Heart right ventricle (tissue), 16 donors: ENCODE measurements at regions of chr13 and their contacts with region 1.

Region 1: DNA sequence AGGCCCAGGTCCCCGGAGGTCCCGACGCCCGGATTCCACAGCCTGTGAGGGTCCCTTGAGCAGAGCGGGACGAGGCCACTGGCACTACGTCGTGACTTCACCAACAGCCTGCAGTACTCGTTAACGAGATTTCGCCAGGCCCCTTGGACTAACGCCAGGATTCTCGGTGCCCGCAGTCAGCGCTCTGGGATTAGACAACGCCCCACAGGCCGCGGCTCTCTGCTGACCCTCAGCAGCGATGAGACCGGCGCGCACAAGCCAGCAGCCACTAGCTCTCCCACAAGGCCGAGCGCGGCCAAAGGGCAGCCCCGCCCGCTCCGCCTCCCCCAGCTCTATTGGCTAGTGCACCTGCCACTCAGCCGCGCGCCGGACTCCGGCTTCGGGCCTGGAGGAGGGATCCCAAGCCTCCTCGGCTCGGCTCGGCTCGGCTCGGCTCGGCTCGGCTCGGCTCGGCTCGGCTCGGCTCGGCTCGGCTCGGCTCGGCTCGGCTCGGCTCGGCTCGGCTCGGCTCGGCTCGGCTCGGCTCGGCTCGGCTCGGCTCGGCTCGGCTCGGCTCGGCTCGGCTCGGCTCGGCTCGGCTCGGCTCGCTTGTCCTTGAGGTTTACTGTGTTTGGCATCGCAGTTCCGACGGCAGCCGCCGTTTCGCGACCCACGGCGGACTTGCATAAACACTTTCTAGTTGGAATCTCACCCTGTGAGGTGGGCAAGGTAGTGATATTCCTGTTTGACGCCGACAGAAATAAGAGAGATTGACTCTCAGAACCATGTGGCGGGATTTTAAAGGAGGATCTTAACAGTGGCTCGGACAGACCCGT is 231.7 kb upstream of the SERP2 start:
- DNase-seq: peak; percentile 98 to 99
- ATAC-seq: peak; percentile 99 to 100 (median 100)
- H3K4me3 ChIP-seq: peak overlapping the region; percentile 50 to 79 (median 58)
- H3K27ac ChIP-seq: peak overlapping the region; percentile 91 to 99 (median 96)
- H3K4me1 ChIP-seq: peaks cover 5 to 22% (median 10%) of the 10 kb centered on the region in 9 donors
- H3K27me3 ChIP-seq: no peaks in the 10 kb centered on the region
- CTCF ChIP-seq: peak in 2 of 9 donors; percentile 9 to 21

Region 2: DNA sequence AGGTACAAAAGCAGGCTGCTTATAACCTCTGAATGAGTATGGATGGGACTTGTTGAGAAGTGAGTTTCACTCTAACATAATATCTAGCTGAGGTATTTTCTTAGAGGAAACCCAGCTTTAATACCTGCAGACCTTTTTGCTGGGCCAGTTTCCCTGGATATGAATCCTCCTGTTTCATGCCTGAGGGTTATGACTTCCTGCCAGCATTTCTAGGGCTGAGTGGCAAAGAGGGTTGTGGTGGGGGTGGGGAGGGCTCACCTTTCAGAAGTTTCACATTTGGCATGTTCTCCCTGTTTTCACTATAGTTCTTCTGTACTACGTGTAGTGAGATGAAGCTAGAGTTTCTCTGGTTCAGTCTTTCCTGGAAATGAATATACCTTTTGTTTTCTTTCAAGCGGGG is 188.6 kb before region 1 on chr13:
- intact Hi-C with region 1: no loop called
- DNase-seq: no peak
- ATAC-seq: no peak
- H3K4me3 ChIP-seq: no peak overlapping the region
- H3K27ac ChIP-seq: no peak overlapping the region
- H3K4me1 ChIP-seq: peaks cover 0 to 9% (median 0%) of the 10 kb centered on the region in 9 donors
- H3K27me3 ChIP-seq: peaks cover 0 to 16% (median 0%) of the 10 kb centered on the region in 7 donors
- CTCF ChIP-seq: no peak

Region 3: GRCh38 chr13:44219577-44220548 is 77.9 kb after region 1 on chr13:
- intact Hi-C with region 1: loop called in 1 of 10 experiments (anchors 5 kb)
- DNase-seq: no peak
- ATAC-seq: peak in 7 of 8 donors; percentile 15 to 37 (median 27)
- H3K4me3 ChIP-seq: no peak overlapping the region
- H3K27ac ChIP-seq: peak overlapping the region; percentile 36 to 68 (median 54)
- H3K4me1 ChIP-seq: peaks cover 6 to 45% (median 30%) of the 10 kb centered on the region in 9 donors
- H3K27me3 ChIP-seq: no peaks in the 10 kb centered on the region
- CTCF ChIP-seq: no peak

Region 4: DNA sequence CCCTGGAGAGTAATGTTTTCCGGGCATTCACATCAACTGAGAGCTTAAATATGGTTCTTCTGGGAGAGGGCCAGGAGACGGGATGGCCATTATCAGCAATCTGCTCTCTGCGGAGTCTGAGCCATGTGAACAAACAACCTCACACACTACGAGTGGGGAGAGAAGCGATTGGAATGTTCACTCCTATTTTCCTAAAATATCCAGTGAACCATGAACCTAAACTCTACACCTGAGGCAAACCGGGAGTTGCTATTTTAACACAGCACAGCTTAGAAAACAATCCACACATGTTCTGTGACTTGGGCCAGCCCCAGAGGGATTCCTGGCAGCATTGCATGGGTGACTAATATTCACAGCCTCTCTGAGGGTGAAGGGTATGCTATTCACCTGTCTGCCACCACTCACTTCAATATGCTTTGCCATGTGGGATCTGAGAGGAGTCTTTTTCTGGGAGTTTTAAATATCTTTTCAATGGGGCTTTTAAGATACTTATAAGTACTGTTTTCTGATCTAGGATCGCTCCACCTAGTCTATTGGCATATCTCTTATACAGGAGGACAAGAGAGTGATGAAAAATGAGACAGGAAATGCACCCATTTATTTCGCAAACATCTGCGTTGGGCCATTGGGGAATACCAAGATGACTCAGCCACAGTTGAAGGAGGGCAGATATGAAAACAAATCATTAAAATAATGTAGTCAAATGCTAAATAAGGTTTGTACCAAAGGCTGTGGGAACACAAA is 159.1 kb after region 1 on chr13:
- intact Hi-C with region 1: loop called in 1 of 10 experiments (anchors 5 kb)
- DNase-seq: peak in 1 of 2 donors; percentile 74
- ATAC-seq: peak; percentile 54 to 92 (median 84)
- H3K4me3 ChIP-seq: no peak overlapping the region
- H3K27ac ChIP-seq: peak overlapping the region; percentile 12 to 82 (median 70)
- H3K4me1 ChIP-seq: peaks cover 9 to 78% (median 55%) of the 10 kb centered on the region in 9 donors
- H3K27me3 ChIP-seq: no peaks in the 10 kb centered on the region
- CTCF ChIP-seq: no peak